Colonic mucosa (tissue), 4 donors: ENCODE measurements at regions of chr20 and their contacts with region 1.

Region 1: GRCh38 chr20:20568604-20569205 is 143.7 kb downstream of the RALGAPA2 start:
- DNase-seq: no peak
- H3K4me3 ChIP-seq: no peak overlapping the region
- H3K27ac ChIP-seq: no peak overlapping the region
- H3K4me1 ChIP-seq: no peaks in the 10 kb centered on the region
- H3K27me3 ChIP-seq: no peaks in the 10 kb centered on the region
- CTCF ChIP-seq: peak; percentile 54

Region 2: DNA sequence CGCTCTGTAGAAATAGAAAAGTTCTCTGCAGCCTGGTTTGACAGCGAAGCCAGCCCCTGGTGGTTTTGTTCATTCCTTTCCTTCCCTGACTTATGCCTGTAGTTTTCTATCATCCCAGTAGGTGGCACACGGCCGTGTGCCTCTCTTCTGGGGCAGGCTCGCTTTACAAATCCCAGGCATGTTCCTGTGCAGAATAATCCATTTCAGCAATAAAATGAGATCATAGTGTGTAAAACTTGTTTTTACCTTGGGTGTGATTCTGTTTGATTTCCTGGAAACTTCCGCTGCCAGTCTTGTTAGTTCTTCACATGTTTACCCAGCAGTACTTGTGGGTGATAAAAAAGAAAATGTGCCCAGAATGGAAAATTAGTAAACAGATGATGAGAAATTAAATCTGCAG is 208.2 kb before region 1 on chr20:
- intact Hi-C with region 1: loop called (anchors 5 kb)
- DNase-seq: peak; percentile 65
- H3K4me3 ChIP-seq: no peak overlapping the region
- H3K27ac ChIP-seq: no peak overlapping the region
- H3K4me1 ChIP-seq: peaks cover 4% of the 10 kb centered on the region
- H3K27me3 ChIP-seq: peaks cover 29% of the 10 kb centered on the region
- CTCF ChIP-seq: peak; percentile 82